ENCODE measurements at regions of chr12 and their contacts with region 1.

Region 1: GRCh38 chr12:130871286-130872178 is at the start of gene RAN:
- DNase-seq: peak; percentile 91
- H3K4me3 Mint-ChIP-seq: peak within 1 kb of the TSS; percentile 98
- H3K27ac Mint-ChIP-seq: peak within 1 kb of the TSS; percentile 99
- H3K4me1 Mint-ChIP-seq: peaks cover 61% of the 10 kb centered on the region
- H3K27me3 Mint-ChIP-seq: no peaks in the 10 kb centered on the region
- total RNA-seq, gene RAN: 2,370 to 2,418 TPM

Region 2: DNA sequence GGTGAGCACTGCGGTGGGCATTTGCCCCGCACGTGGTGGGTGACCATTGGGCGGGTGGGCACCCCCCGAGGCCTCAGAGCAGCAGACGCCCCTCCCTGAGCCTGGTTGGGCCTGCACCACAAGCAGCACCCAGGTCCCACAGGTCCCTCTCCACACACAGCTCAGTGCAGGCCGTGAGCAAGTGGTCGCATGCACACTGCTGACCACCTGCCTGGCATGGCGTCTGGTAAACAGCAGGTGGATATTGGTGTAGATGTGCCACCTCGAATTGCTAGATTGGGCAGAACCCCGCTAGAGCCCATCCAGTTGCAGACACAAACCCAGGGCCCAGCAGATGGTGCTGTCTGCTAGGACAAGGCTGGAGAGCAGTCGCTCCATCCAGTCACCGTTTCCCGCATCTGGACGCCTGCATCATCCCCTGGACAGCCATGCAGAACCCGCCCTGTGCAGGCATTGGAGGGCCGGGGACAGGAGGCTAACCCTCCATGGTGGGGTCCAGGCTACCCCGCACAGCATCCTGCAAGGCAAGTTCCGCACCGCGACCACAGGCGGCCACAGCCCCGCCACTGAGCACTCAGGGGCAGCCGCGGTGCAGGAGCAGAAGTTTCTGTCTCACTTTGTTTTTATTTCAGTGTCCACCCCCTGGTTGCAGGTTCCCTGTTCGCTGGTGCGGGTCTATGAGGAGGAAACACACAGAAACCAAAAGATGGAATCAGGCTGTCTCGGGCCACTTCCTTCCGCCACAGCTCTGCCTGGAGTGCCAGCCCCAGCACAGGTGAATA is 109.8 kb before region 1 on chr12:
- CTCF ChIA-PET with region 1: no interaction called
- intact Hi-C with region 1: loop called (anchors 5 kb)
- DNase-seq: peak; percentile 79
- H3K4me3 Mint-ChIP-seq: peak overlapping the region; percentile 58
- H3K27ac Mint-ChIP-seq: no peak overlapping the region
- H3K4me1 Mint-ChIP-seq: no peaks in the 10 kb centered on the region
- H3K27me3 Mint-ChIP-seq: peaks cover 8% of the 10 kb centered on the region

Region 3: GRCh38 chr12:130838951-130839769 is 32.4 kb before region 1 on chr12 and contains the start of gene STX2:
- CTCF ChIA-PET with region 1: interaction called, 5 read pairs
- intact Hi-C with region 1: loop called (anchors 1 kb)
- DNase-seq: peak; percentile 84
- H3K4me3 Mint-ChIP-seq: peak within 1 kb of the TSS; percentile 78
- H3K27ac Mint-ChIP-seq: peak within 1 kb of the TSS; percentile 21
- H3K4me1 Mint-ChIP-seq: peaks cover 29% of the 10 kb centered on the region
- H3K27me3 Mint-ChIP-seq: no peaks in the 10 kb centered on the region
- total RNA-seq, gene STX2: 10.8 to 13.6 TPM

Region 4: GRCh38 chr12:131415781-131416180 is 544.2 kb after region 1 on chr12:
- CTCF ChIA-PET with region 1: no interaction called
- intact Hi-C with region 1: no loop called
- DNase-seq: no peak
- H3K4me3 Mint-ChIP-seq: no peak overlapping the region
- H3K27ac Mint-ChIP-seq: no peak overlapping the region
- H3K4me1 Mint-ChIP-seq: no peaks in the 10 kb centered on the region
- H3K27me3 Mint-ChIP-seq: no peaks in the 10 kb centered on the region

Region 5: DNA sequence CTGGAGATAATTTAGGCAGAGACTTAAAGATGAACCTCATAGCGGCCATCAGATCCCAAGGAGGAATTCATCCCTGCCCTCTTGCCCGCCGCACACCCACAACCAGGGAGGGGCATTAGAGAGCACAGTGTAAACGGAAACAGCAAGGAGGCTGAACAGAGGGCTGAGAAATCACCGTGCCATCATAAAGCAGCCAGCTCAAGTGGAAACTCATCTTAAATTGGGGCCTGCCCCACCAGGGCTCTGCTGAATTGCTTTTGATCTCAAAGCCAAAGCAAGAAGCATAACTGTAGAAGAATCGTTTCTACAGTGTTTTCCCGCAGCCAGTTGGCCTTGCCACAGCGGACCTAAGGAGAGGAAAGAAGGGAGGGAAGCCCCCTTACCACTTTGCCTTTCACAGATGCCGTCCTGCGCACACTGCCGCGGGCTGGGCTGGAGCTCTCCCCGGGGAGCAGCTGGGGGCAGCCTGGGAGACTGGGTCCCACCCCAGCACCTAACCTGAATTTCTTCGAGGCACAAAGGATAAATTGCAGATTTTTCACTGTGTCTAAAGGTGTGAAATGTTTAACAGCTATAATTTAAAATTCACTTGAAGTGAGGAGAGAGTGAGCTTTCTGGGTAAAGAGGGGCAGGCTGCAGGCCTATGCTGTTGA is 904.8 kb after region 1 on chr12:
- CTCF ChIA-PET with region 1: no interaction called
- intact Hi-C with region 1: loop called (anchors 5 kb)
- DNase-seq: peak; percentile 73
- H3K4me3 Mint-ChIP-seq: no peak overlapping the region
- H3K27ac Mint-ChIP-seq: peak overlapping the region; percentile 81
- H3K4me1 Mint-ChIP-seq: peaks cover 42% of the 10 kb centered on the region
- H3K27me3 Mint-ChIP-seq: no peaks in the 10 kb centered on the region

Region 6: GRCh38 chr12:131894313-131894860 is 1022.9 kb after region 1 on chr12 and contains the start of gene ULK1:
- CTCF ChIA-PET with region 1: no interaction called
- intact Hi-C with region 1: loop called (anchors 1 kb)
- DNase-seq: peak; percentile 91
- H3K4me3 Mint-ChIP-seq: peak within 1 kb of the TSS; percentile 79
- H3K27ac Mint-ChIP-seq: no peak within 1 kb of the TSS
- H3K4me1 Mint-ChIP-seq: peaks cover 15% of the 10 kb centered on the region
- H3K27me3 Mint-ChIP-seq: no peaks in the 10 kb centered on the region
- total RNA-seq, gene ULK1: 13.6 to 15.6 TPM

Measured in activated naive CD4-positive, alpha-beta T cell treated with anti-CD3 and anti-CD28 coated beads for 36 hours (primary cell).